ENCODE measurements at regions of chr14 and their contacts with region 1.

Region 1: DNA sequence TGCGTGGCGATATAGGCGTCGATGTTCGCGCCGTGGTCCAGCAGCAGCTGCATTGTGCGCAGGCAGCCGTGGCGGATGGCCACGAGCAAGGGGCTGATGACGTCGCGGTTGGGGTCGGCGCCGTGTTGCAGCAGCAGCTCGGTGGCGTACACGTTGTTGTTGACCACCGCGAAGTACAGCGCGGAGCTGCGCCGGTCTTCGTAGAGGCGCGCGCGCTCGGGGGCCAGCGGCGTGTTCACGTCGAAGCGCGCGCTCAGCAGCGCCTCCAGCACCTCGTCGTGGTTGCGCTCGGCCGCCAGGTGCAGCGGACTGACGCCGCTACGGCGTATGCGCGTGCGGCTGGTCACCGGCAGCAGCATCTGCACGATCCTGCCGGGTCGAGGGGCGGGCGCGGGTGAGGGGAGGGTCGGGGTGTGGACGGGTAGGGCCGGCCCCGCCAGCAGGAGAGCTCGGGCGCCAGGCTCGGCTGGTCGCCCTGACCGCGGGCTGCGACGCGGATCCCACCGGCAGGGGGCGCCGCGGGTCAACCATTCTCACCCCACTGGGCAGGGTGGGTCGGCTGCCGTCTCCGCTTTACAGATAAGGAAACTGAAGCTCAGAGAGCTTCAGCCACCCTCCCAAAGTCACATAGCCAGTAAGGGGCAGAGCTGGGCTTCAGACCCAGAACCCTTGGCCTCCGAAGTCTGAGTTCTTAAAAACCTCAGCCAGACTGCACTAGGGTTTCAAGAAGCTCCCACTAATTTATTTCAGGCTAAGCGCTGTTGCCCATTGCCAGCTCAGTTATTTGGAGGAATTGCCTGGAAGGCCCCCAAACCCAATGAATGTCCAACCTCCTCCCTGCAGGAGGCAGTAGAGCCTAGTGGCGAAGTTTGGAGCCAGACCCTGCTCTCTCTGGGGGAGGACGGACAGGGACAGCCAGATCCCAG is 12.4 kb downstream of the FAM181A start:
- DNase-seq: peak; percentile 29 to 89
- H3K4me3 ChIP-seq: no peak overlapping the region
- H3K4me1 ChIP-seq: no peaks in the 10 kb centered on the region
- H3K27me3 ChIP-seq: no peaks in the 10 kb centered on the region

Region 2: GRCh38 chr14:94001501-94002396 is 62.2 kb after region 1 on chr14:
- in situ Hi-C with region 1: loop called (anchors 5 kb)
- DNase-seq: peak; percentile 64 to 74
- H3K4me3 ChIP-seq: no peak overlapping the region
- H3K4me1 ChIP-seq: 0 out of 2 replicates have a peak, but pooled peaks cover 3% of the 10 kb centered on the region
- H3K27me3 ChIP-seq: no peaks in the 10 kb centered on the region; the same call in 1 of the 2 replicates

Measured in HAP-1 (cell line).